Psoas muscle (tissue), 8 donors: ENCODE measurements at regions of chr13 and their contacts with region 1.

Region 1: DNA sequence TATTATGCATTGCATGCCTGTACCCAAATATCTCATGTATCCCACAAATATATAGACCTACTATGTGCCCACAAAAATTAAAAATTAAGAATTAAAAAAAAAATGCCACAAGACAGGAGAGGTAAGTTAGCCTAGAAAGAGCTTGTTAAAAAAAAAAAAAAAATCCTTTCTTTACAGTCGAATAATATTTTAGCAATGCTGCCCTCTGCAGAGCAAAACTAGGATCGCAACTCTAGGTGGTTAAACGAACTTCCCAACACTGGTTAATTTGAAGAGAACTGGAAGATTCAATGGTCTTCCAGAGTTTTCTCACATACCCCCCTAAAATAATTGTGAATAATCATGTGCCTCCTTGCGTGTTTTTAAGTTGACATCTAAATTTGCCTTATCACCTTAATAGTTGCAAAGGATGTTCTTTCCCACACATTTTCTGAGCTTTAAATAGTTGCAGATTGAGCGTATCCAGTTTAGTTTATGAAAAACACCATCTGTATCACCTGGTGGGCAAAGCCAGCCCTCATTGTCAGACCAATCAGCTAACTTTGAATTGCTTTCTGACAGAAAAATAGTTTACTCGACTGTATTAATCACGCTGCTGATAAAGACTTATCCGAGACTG is 47.4 kb upstream of the RCBTB2 start:
- DNase-seq: peak; percentile 53 to 69
- ATAC-seq: peak; percentile 52 to 84 (median 69)
- H3K4me3 ChIP-seq: no peak overlapping the region
- H3K27ac ChIP-seq: no peak overlapping the region
- H3K4me1 ChIP-seq: no peaks in the 10 kb centered on the region
- H3K27me3 ChIP-seq: no peaks in the 10 kb centered on the region
- CTCF ChIP-seq: peak; percentile 75

Region 2: DNA sequence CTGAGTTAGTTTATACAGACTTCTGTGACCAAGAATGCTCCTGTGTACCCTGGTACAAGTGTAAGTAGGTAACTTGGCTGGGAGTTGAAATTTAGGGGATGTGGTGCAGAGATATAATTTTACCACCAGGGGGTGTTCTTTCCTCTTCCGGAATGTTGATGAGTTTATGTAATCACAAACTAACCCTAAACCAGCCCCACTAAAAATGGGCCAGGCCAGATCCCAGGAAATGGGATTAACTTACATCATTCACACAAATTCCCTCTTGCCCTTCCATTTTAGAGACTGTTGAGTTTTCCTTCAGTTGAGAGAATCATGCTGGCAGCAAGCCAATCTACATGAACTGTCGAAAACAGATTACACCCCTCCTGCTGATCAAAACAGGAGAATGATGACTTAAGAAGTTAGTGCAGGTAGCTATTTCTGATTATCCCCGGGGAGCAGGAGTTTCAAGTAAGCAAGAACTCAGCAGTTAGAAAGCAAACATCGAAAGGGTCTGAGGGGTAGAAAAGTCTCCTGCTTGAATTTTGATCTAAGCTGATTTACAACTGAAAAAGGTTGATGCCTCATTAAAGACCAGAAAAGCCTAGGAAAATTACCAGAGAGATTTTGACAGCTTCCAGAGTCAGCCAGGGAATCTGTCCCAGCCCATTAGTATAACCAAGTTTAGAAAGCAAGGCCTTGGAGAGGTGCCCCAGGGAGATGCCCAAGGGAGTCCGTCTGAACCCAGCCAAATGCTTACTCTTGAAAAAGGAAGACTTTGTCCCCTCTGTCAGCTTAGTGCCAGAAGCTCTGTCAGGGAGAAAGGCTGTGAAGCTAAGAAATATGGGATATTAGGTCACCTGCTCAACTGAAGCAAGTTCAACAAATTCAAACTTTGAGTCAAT is 453.1 kb before region 1 on chr13:
- intact Hi-C with region 1: loop called in 1 of 2 experiments (anchors 10 kb)
- DNase-seq: peak; percentile 60 to 85
- ATAC-seq: peak; percentile 74 to 92 (median 82)
- H3K4me3 ChIP-seq: no peak overlapping the region
- H3K27ac ChIP-seq: peak overlapping the region; percentile 68
- H3K4me1 ChIP-seq: peaks cover 17% of the 10 kb centered on the region
- H3K27me3 ChIP-seq: no peaks in the 10 kb centered on the region
- CTCF ChIP-seq: peak; percentile 72

Region 3: GRCh38 chr13:48233046-48233907 is 347.0 kb before region 1 on chr13 and contains the start of gene ITM2B:
- intact Hi-C with region 1: loop called in 1 of 2 experiments (anchors 10 kb)
- DNase-seq: peak; percentile 78 to 88
- ATAC-seq: peak; percentile 80 to 87 (median 82)
- H3K4me3 ChIP-seq: peak within 1 kb of the TSS; percentile 97
- H3K27ac ChIP-seq: peak within 1 kb of the TSS; percentile 99
- H3K4me1 ChIP-seq: peaks cover 30% of the 10 kb centered on the region
- H3K27me3 ChIP-seq: no peaks in the 10 kb centered on the region
- CTCF ChIP-seq: peak; percentile 52
- total RNA-seq, gene ITM2B: 122 to 219 (median 171) TPM

Region 4: GRCh38 chr13:48334534-48335127 is 245.7 kb before region 1 on chr13:
- intact Hi-C with region 1: loop called (anchors 5 kb)
- DNase-seq: no peak
- ATAC-seq: peak in 2 of 4 donors; percentile 64 to 81
- H3K4me3 ChIP-seq: no peak overlapping the region
- H3K27ac ChIP-seq: no peak overlapping the region
- H3K4me1 ChIP-seq: peaks cover 9% of the 10 kb centered on the region
- H3K27me3 ChIP-seq: no peaks in the 10 kb centered on the region
- CTCF ChIP-seq: peak; percentile 66

Region 5: GRCh38 chr13:48412881-48413351 is 167.4 kb before region 1 on chr13 and contains the start of gene LPAR6:
- intact Hi-C with region 1: loop called in 1 of 2 experiments (anchors 5 kb)
- DNase-seq: peak in 1 of 2 donors; percentile 28
- ATAC-seq: peak in 3 of 4 donors; percentile 37 to 67 (median 48)
- H3K4me3 ChIP-seq: peak within 1 kb of the TSS; percentile 60
- H3K27ac ChIP-seq: peak within 1 kb of the TSS; percentile 56
- H3K4me1 ChIP-seq: no peaks in the 10 kb centered on the region
- H3K27me3 ChIP-seq: no peaks in the 10 kb centered on the region
- CTCF ChIP-seq: no peak
- total RNA-seq, gene LPAR6: 4.1 to 11.0 (median 6.6) TPM

Region 6: GRCh38 chr13:48505597-48506091 is 74.7 kb before region 1 on chr13:
- intact Hi-C with region 1: loop called in 1 of 2 experiments (anchors 5 kb)
- DNase-seq: no peak
- ATAC-seq: peak; percentile 32 to 64 (median 60)
- H3K4me3 ChIP-seq: peak overlapping the region; percentile 9
- H3K27ac ChIP-seq: peak overlapping the region; percentile 72
- H3K4me1 ChIP-seq: peaks cover 3% of the 10 kb centered on the region
- H3K27me3 ChIP-seq: no peaks in the 10 kb centered on the region
- CTCF ChIP-seq: no peak

Region 7: DNA sequence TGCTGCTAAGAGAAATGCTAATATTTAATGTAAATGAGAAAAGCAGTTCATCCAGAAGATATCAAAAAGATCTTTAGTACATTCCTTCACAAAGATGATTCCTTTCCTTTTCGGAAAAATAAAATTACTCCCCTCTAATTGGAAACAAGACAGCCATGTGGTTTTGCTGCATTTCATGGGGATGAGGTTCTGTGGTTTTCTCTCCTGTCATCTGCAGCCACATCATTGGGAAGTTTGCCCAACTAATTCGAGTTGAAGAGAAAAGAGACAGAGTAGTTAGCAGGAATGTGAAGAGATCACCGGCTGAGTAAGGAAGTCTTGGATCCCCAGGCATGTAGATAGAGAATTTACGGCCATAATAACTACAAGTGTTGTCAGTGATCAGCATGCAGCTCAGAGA is 195.5 kb after region 1 on chr13:
- intact Hi-C with region 1: loop called in 1 of 2 experiments (anchors 10 kb)
- DNase-seq: no peak
- ATAC-seq: no peak
- H3K4me3 ChIP-seq: no peak overlapping the region
- H3K27ac ChIP-seq: no peak overlapping the region
- H3K4me1 ChIP-seq: no peaks in the 10 kb centered on the region
- H3K27me3 ChIP-seq: peaks cover 0 to 9% (median 0%) of the 10 kb centered on the region in 3 donors
- CTCF ChIP-seq: no peak